Posterior cingulate gyrus (tissue), 11 donors: ENCODE measurements at regions of chr1 and their contacts with region 1.

Region 1: GRCh38 chr1:7667625-7668218 is 103.4 kb upstream of the VAMP3 start:
- DNase-seq: peak; percentile 88 to 99 (median 97)

Region 2: DNA sequence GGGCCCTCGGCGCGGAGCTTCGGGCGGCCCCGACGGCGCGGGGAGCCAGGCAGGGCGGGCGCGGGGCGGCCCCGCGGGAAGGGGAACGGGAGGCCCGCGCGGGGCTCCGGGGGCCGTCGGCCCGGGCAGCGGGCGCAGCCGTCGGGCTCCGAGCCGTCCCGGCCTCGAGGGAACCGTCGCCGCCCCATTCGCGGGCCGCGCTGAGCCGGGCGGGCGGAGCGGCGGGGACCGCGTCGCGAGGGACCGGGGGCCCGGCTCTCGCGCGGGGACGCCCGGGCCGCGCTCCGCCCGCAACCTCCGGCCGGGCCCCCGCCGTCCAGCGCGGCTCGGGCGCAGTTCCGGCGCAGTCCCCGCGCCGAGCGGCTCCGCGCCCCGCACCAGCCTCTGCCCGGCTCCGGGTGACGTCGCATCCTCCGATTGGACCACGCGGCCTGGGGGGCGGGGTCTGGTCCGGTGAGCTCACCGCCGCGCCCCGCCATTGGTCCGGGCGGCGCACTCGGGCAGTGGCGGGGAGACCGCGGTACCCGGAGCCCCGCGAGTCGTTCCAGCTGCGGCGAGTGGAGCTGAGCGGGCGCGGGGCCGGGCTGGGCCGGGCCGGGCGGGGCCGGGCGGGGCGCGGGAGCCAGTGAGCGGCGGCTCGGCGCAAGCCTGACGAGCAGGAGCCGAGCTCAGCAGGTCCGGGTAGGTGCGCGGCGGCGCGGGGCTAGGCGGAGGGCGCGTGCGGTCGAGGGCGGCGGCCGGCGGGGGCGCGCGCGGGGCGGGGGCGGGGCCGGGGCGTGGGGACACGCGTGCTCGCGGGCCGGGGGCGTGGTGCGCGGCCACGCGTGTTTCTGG is 36.7 kb after region 1 on chr1:
- intact Hi-C with region 1: loop called (anchors 5 kb)
- DNase-seq: peak; percentile 95 to 100 (median 98)

Region 3: DNA sequence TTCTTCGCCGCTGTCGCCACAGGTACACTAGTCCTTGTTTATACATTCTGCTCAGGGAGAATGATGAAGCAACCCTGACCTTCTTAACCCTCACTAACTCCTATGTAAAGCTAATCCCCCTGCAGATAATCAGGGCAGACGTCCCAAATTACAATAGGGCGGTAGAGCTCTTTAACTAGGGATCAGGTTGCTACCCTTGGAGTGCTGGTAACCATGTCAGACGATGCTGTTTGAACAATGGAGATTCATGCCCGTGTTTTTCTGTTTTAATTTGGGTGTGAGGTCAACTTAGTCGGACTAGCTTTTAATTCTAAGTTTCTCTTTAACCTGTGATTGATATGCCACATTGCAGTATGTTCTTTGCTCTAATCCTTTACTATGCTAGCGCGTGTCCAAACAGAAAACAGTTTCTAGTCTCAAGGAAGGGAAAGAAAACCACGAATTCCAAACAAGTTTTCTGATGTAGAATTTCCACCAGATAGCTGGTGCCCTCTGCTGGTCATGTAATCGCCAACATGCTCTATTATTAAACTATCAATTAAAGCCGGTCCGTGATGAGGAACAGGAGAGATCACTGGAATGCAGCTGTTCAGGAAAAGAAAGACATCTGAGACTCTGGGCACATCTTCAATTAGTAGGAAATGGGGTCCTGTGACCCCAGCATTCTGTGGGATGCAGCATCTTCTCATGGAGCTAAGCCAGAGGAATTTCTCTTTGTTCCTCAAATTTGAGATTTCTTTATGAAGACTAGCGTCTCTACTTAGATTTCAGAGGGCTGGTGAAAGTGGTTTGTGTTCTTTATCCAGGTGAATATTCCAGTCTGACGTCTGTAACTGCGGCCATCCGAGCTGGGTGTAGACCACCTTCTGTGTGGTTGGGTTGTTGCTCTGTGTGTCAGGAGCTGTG is 85.0 kb after region 1 on chr1:
- intact Hi-C with region 1: loop called (anchors 1 kb)
- DNase-seq: peak in 6 of 10 donors; percentile 46 to 87 (median 69)

Region 4: GRCh38 chr1:7770997-7771822 is 103.5 kb after region 1 on chr1 and contains the start of gene VAMP3:
- intact Hi-C with region 1: loop called (anchors 5 kb)
- DNase-seq: peak; percentile 75 to 98 (median 90)

Region 5: DNA sequence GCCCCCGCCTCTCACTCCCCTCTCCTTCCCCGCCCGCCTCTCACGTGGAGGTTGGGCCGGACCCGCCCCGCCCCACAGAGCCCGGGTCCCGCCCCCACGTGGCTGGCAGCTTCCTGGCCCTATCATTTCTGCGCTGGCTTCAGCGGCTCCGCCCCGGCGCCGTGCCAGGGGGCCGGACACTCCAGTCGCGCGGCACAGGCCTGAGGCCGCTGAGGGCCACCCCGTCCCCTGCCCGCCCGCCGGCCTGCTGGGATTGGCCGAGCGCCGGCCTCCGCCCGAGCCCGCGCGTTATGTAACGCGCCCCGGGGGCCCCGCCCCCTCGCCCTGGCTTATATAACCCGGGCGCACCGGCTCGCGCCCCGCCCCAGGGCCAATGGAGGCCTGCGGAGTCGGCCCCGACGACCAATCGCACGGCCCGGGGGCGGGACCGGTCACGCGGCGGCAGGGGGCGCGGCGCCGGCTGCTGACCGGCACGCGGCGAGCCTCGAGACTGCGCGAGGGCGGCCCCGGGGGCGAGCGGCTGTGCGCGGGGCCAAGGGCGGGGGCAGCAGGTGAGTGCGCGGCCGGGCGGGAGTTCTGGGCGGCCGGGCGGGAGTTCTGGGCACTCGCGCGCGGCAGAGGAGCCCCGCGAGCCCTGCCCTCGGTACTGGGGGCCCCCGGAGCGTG is 116.2 kb after region 1 on chr1 and contains the start of gene PER3:
- intact Hi-C with region 1: no loop called
- DNase-seq: peak; percentile 94 to 100 (median 98)

Region 6: GRCh38 chr1:7902478-7903085 is 234.9 kb after region 1 on chr1:
- intact Hi-C with region 1: loop called (anchors 1 kb)
- DNase-seq: peak; percentile 23 to 93 (median 66)

Region 7: GRCh38 chr1:7912743-7913557 is 245.2 kb after region 1 on chr1:
- intact Hi-C with region 1: no loop called
- DNase-seq: no peak